Head of caudate nucleus (tissue), 42 donors: ENCODE measurements at regions of chr21 and their contacts with region 1.

Region 1: DNA sequence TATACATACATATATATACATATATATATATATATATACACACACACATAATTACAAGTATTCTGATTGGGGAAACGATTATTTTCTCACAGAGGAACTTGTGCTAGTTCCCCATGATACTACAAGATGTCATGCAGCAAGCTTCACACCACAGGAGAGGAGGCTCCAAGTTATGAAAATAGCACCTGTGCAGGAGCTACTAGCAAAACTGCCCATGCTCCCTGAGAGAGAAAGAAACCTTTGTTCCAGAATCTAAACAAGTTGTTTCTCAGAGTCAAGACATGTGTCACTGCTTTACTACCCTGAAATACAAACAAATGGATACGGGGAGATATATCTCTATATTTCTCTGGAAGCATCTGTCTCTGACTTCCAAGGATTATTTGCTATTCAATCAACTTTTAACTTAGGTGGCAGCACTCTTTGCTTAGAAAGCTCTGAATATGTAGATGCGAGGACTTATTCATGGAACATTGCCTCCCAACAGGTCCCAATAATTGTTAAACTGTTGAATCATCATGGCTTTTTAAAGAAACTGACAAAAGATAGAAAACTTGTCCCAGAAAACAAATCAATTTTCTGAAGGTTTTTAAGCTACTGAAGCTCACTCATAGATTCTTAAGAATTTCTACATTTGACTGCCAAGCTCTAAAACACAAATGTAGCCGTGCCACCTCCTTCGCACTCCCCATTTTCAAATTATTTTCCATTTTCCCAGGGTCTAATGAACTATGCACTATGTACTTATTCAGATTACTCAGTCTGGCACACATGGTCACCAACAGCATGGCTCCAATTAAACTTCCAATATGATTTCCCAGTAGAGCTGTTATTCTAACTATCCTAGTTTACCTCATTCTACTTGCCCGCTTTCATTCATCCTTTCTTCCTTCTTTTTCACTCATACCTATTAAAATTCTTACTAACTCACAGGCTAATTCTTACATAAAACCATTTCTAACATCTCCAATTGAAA is 929.1 kb downstream of the LTN1 start:
- DNase-seq: peak in 1 of 42 donors; percentile 25

Region 2: GRCh38 chr21:27831816-27832569 is 231.5 kb before region 1 on chr21:
- intact Hi-C with region 1: no loop called
- DNase-seq: no peak

Region 3: GRCh38 chr21:28112511-28112910 is 49.0 kb after region 1 on chr21:
- intact Hi-C with region 1: no loop called
- DNase-seq: no peak

Region 4: DNA sequence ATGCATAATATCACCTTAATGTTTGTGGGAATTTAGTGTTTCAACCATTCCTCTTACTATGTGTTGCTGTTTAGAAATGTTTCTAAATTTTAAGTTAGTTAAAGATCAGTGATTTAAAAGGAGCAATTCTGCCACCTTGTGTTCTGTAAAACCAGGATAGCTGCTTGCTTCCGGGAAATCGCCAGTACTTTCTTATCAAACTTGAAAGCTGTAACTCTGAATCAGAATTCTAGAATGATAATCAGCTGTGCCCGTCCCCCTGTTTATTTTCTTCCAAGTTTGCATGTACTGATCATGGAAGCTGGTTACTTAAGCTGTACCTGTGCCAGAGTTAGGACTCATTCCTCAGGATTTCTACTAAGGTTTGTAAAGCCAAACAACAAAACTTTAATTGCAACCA is 272.8 kb after region 1 on chr21:
- intact Hi-C with region 1: loop called (anchors 10 kb)
- DNase-seq: peak in 22 of 42 donors; percentile 6 to 73 (median 31)

Region 5: GRCh38 chr21:28427394-28428022 is 364.0 kb after region 1 on chr21:
- intact Hi-C with region 1: no loop called
- DNase-seq: no peak